ENCODE measurements at regions of chr16 and their contacts with region 1.

Region 1: DNA sequence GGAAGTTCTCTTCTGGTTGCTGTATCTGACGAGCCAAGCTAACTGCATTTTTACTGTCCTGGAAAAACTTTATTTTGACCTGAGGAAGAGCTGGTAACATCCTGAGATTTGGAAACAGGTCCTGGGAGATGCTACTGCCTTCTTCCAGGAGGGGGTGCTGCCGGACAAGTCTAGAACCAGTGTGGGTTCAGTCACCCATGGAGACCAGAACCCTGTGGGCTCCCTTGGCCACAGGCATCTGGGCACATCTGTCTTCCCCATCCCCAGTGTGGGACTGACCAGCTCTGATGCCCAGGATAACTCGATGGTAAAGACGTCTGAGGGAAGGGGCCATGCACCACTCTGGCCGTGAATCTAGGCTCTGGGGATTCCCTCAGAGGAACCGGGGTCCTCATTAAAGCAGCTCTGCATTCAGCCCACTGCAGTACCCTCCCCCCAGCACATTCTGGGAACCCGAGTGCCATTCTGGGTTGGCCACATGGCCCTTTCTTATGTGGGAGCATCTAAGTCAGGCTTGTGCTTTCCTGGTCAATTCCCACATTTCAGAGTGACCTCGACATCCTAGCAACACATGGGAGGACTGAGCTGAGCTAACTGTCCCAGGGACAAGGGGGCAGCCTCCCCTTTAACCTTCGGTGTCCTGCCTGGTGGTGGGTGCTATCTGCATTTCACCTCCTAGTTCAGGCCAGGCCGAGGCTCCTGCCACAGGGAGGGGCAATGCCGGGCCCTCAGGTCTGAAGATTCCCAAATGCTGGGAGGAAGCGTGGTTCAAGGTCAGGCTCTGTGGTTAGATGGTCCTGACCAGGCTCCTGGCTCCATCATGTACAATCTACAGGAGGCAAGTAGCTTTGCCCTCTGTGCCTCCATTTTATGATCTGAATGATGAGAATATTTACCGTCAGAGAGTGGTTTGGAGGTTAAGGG is 6.4 kb downstream of the C16orf86 start:
- DNase-seq: peak; percentile 70 to 83 (median 79)
- H3K4me3 ChIP-seq: peak overlapping the region in 1 of 7 experiments; percentile 36
- H3K27ac ChIP-seq: peak overlapping the region in 1 of 2 experiments; percentile 62
- H3K4me1 ChIP-seq: peaks cover 6 to 37% (median 32%) of the 10 kb centered on the region in 4 experiments
- H3K27me3 ChIP-seq: no peaks in the 10 kb centered on the region

Region 2: GRCh38 chr16:67632415-67633172 is 40.4 kb before region 1 on chr16:
- CTCF ChIA-PET with region 1: no interaction called
- POLR2A ChIA-PET with region 1: no interaction called
- DNase-seq: no peak
- H3K4me3 ChIP-seq: no peak overlapping the region
- H3K27ac ChIP-seq: no peak overlapping the region
- H3K4me1 ChIP-seq: no peaks in the 10 kb centered on the region
- H3K27me3 ChIP-seq: no peaks in the 10 kb centered on the region

Region 3: DNA sequence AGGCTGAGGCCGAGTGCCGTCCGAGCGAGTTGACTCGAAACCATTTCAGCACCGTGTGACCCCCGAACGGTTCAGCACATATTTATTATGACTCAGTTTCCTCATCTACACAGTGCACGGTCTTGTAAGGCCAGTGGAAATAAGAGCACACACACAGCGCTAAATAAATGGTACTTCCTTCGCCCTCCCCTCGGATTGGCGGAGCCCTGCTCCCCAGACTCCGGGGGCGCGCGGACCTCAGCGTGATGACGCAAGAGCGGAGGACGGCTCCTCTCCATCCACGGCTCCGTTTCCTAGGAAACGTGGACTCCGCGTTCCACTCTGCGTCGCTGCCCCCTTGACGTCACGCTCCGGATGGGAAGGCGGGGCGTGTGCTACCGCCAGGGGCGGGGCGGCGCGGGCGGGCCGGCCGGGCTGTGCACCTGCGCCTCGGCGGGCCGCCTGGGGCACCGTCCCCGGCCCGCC is 12.4 kb before region 1 on chr16 and contains the start of gene PARD6A:
- CTCF ChIA-PET with region 1: interaction called, 10 read pairs
- POLR2A ChIA-PET with region 1: no interaction called
- DNase-seq: peak; percentile 97 to 98 (median 97)
- H3K4me3 ChIP-seq: peak within 1 kb of the TSS; percentile 77 to 99 (median 92)
- H3K27ac ChIP-seq: peak within 1 kb of the TSS; percentile 66 to 90
- H3K4me1 ChIP-seq: peaks cover under 1 to 30% (median 23%) of the 10 kb centered on the region in 4 experiments
- H3K27me3 ChIP-seq: no peaks in the 10 kb centered on the region

Region 4: GRCh38 chr16:67685388-67686112 is 12.5 kb after region 1 on chr16:
- CTCF ChIA-PET with region 1: interaction called, 15 read pairs
- POLR2A ChIA-PET with region 1: no interaction called
- DNase-seq: no peak
- H3K4me3 ChIP-seq: no peak overlapping the region
- H3K27ac ChIP-seq: no peak overlapping the region
- H3K4me1 ChIP-seq: no peaks in the 10 kb centered on the region
- H3K27me3 ChIP-seq: no peaks in the 10 kb centered on the region

Region 5: GRCh38 chr16:67865316-67865715 is 192.3 kb after region 1 on chr16:
- CTCF ChIA-PET with region 1: interaction called, 24 read pairs
- POLR2A ChIA-PET with region 1: interaction called, 3 read pairs
- DNase-seq: peak; percentile 47 to 73 (median 69)
- H3K4me3 ChIP-seq: no peak overlapping the region
- H3K27ac ChIP-seq: no peak overlapping the region
- H3K4me1 ChIP-seq: no peaks in the 10 kb centered on the region
- H3K27me3 ChIP-seq: no peaks in the 10 kb centered on the region